Mammary epithelial cell (primary cell): ENCODE measurements at regions of chr13 and their contacts with region 1.

Region 1: GRCh38 chr13:24220086-24220703 is 59.7 kb downstream of the SPATA13 start:
- DNase-seq: peak; percentile 67
- H3K4me3 ChIP-seq: no peak overlapping the region
- H3K27ac ChIP-seq: no peak overlapping the region
- H3K4me1 ChIP-seq: peaks cover 7% of the 10 kb centered on the region
- H3K27me3 ChIP-seq: peaks cover 4% of the 10 kb centered on the region
- CTCF ChIP-seq: peak; percentile 75 to 79

Region 2: GRCh38 chr13:23741879-23742510 is 478.2 kb before region 1 on chr13:
- CTCF ChIA-PET with region 1: no interaction called
- dilution Hi-C with region 1: no loop called
- in situ Hi-C with region 1: no loop called
- intact Hi-C with region 1: no loop called
- DNase-seq: no peak
- H3K4me3 ChIP-seq: no peak overlapping the region
- H3K27ac ChIP-seq: no peak overlapping the region
- H3K4me1 ChIP-seq: peaks cover 15% of the 10 kb centered on the region
- H3K27me3 ChIP-seq: no peaks in the 10 kb centered on the region
- CTCF ChIP-seq: peak; percentile 43 to 48

Region 3: GRCh38 chr13:23871616-23872220 is 348.5 kb before region 1 on chr13:
- CTCF ChIA-PET with region 1: no interaction called
- dilution Hi-C with region 1: no loop called
- in situ Hi-C with region 1: no loop called
- intact Hi-C with region 1: loop called (anchors 1 kb)
- DNase-seq: no peak
- H3K4me3 ChIP-seq: no peak overlapping the region
- H3K27ac ChIP-seq: no peak overlapping the region
- H3K4me1 ChIP-seq: peaks cover 6% of the 10 kb centered on the region
- H3K27me3 ChIP-seq: no peaks in the 10 kb centered on the region
- CTCF ChIP-seq: peak; percentile 36 to 51

Region 4: DNA sequence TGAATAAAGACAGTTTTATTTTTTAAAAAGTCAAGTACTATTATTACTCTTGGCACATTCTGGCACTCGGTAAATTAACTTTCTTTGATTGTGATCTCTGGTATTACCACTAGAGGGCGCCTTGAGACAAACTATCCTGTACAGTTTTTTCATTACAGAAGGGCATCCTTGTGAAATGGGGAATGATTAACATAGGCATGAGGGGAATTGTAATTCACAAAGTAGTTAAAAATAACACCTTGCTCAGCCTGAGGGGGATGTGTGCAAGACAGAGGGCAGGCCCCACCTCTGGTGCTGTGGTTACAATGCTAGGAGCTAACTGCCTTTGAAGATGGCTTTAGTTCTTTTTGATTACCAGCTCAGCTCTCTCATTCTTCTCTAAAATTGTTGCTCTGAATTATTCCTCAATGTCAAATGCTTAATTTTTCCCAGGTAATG is 298.7 kb before region 1 on chr13:
- CTCF ChIA-PET with region 1: no interaction called
- dilution Hi-C with region 1: no loop called
- in situ Hi-C with region 1: loop called (anchors 10 to 25 kb)
- intact Hi-C with region 1: loop called (anchors 1 kb)
- DNase-seq: peak; percentile 55
- H3K4me3 ChIP-seq: no peak overlapping the region
- H3K27ac ChIP-seq: no peak overlapping the region
- H3K4me1 ChIP-seq: peaks cover 4% of the 10 kb centered on the region
- H3K27me3 ChIP-seq: no peaks in the 10 kb centered on the region
- CTCF ChIP-seq: peak; percentile 55 to 73

Region 5: DNA sequence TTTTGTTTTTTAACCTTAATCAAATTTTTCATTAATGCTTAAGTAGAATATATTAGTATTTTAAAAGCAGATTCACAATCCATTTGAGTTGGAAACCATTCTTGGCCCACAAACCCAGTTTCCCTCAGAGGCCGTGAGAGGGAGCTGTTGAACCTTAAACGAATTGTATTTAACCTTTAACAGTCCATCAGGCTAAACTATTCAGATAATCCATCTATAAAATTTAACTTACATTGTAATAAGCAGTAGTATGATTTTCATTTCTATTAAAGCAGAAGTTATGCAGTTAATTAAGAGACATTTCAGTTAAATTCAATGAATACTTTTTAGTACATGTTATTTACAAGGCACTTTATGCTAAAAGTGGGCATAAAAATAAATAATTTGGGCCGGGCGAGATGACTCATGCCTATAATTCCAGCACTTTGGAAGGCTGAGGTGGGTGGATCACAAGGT is 199.8 kb before region 1 on chr13:
- CTCF ChIA-PET with region 1: no interaction called
- dilution Hi-C with region 1: loop called (anchors 5 kb)
- in situ Hi-C with region 1: loop called (anchors 10 to 25 kb)
- intact Hi-C with region 1: loop called (anchors 1 kb)
- DNase-seq: peak; percentile 29
- H3K4me3 ChIP-seq: no peak overlapping the region
- H3K27ac ChIP-seq: no peak overlapping the region
- H3K4me1 ChIP-seq: no peaks in the 10 kb centered on the region
- H3K27me3 ChIP-seq: no peaks in the 10 kb centered on the region
- CTCF ChIP-seq: peak; percentile 71 to 79

Region 6: GRCh38 chr13:24243302-24243701 is 23.1 kb after region 1 on chr13:
- CTCF ChIA-PET with region 1: no interaction called
- dilution Hi-C with region 1: no loop called
- in situ Hi-C with region 1: no loop called
- intact Hi-C with region 1: no loop called
- DNase-seq: no peak
- H3K4me3 ChIP-seq: no peak overlapping the region
- H3K27ac ChIP-seq: no peak overlapping the region
- H3K4me1 ChIP-seq: no peaks in the 10 kb centered on the region
- H3K27me3 ChIP-seq: no peaks in the 10 kb centered on the region
- CTCF ChIP-seq: no peak